Caco-2 (cell line): ENCODE measurements at regions of chr3 and their contacts with region 1.

Region 1: GRCh38 chr3:6799264-6799915 is 61.5 kb upstream of the GRM7 start:
- DNase-seq: peak; percentile 31 to 54
- H3K4me3 ChIP-seq: no peak overlapping the region
- H3K4me3 Mint-ChIP-seq: no peak overlapping the region
- H3K27ac Mint-ChIP-seq: no peak overlapping the region
- H3K4me1 ChIP-seq: no peaks in the 10 kb centered on the region
- H3K4me1 Mint-ChIP-seq: no peaks in the 10 kb centered on the region
- H3K27me3 ChIP-seq: no peaks in the 10 kb centered on the region
- H3K27me3 Mint-ChIP-seq: no peaks in the 10 kb centered on the region
- CTCF ChIP-seq: peak; percentile 80 to 81

Region 2: DNA sequence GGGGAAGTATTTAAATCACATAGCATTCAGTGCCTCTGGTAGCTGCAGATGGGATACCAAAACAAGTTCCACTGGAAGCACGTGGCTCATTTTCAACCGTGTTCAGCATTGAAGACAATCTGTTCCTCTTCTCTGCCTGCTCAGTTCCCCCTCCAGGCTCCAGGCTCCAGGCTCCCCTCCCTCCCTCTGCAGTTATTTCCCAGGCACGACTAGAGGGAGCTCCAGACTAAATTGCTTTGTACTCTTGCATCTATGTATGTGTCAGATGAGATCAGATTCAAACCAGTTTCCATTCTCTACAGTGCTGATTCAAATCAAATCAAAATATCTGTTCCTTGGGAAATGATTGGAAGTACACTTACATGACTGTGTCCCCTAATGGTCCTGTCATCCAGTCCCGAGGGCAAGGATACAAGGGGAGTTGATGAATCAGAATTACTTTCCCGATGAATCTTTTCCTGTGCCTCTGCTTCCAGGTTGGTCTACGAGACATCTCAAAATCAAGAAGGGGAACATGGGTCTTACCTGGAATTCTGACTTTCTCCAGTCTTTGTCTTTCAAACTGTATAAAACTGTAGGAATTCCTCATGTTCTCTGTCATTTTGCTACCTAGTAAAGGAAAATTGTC is 1011.4 kb before region 1 on chr3:
- CTCF ChIA-PET with region 1: no interaction called
- POLR2A ChIA-PET with region 1: no interaction called
- intact Hi-C with region 1: loop called (anchors 1 kb)
- DNase-seq: peak in 1 of 2 experiments; percentile 23
- H3K4me3 ChIP-seq: no peak overlapping the region
- H3K4me3 Mint-ChIP-seq: no peak overlapping the region
- H3K27ac Mint-ChIP-seq: no peak overlapping the region
- H3K4me1 ChIP-seq: no peaks in the 10 kb centered on the region
- H3K4me1 Mint-ChIP-seq: no peaks in the 10 kb centered on the region
- H3K27me3 ChIP-seq: no peaks in the 10 kb centered on the region
- H3K27me3 Mint-ChIP-seq: no peaks in the 10 kb centered on the region
- CTCF ChIP-seq: peak in 1 of 2 experiments; percentile 43

Region 3: DNA sequence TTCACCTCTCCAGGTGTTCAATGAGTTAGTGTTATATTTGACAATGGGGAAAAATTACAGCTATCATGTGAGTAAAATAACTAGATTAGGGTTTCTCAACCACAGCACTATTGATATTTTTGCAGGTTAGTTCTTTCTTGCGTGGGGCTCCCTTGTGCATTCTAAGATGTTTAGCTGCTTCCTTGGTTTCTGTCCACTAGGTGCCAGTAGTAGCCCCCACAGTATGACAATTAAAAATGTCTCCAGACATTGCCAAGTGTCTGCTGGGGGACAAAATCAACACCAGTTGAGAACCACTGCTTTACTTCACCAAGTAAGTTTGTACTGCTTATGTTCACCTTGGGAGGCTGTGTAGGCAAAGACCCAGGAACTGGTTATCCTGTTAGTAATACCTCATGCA is 993.2 kb before region 1 on chr3:
- CTCF ChIA-PET with region 1: no interaction called
- POLR2A ChIA-PET with region 1: no interaction called
- intact Hi-C with region 1: loop called (anchors 1 kb)
- DNase-seq: peak in 1 of 2 experiments; percentile 8
- H3K4me3 ChIP-seq: no peak overlapping the region
- H3K4me3 Mint-ChIP-seq: no peak overlapping the region
- H3K27ac Mint-ChIP-seq: no peak overlapping the region
- H3K4me1 ChIP-seq: no peaks in the 10 kb centered on the region
- H3K4me1 Mint-ChIP-seq: no peaks in the 10 kb centered on the region
- H3K27me3 ChIP-seq: no peaks in the 10 kb centered on the region
- H3K27me3 Mint-ChIP-seq: peaks cover 4% of the 10 kb centered on the region
- CTCF ChIP-seq: peak; percentile 45 to 55

Region 4: GRCh38 chr3:6204891-6205290 is 594.5 kb before region 1 on chr3:
- CTCF ChIA-PET with region 1: no interaction called
- POLR2A ChIA-PET with region 1: no interaction called
- intact Hi-C with region 1: loop called (anchors 1 kb)
- DNase-seq: no peak
- H3K4me3 ChIP-seq: no peak overlapping the region
- H3K4me3 Mint-ChIP-seq: no peak overlapping the region
- H3K27ac Mint-ChIP-seq: no peak overlapping the region
- H3K4me1 ChIP-seq: no peaks in the 10 kb centered on the region
- H3K4me1 Mint-ChIP-seq: no peaks in the 10 kb centered on the region
- H3K27me3 ChIP-seq: no peaks in the 10 kb centered on the region
- H3K27me3 Mint-ChIP-seq: no peaks in the 10 kb centered on the region
- CTCF ChIP-seq: peak in 1 of 2 experiments; percentile 12

Region 5: GRCh38 chr3:6392123-6392522 is 407.3 kb before region 1 on chr3:
- CTCF ChIA-PET with region 1: no interaction called
- POLR2A ChIA-PET with region 1: no interaction called
- intact Hi-C with region 1: loop called (anchors 1 kb)
- DNase-seq: no peak
- H3K4me3 ChIP-seq: no peak overlapping the region
- H3K4me3 Mint-ChIP-seq: no peak overlapping the region
- H3K27ac Mint-ChIP-seq: no peak overlapping the region
- H3K4me1 ChIP-seq: peaks cover 7% of the 10 kb centered on the region; the same call in 1 of the 2 replicates
- H3K4me1 Mint-ChIP-seq: peaks cover 7% of the 10 kb centered on the region
- H3K27me3 ChIP-seq: no peaks in the 10 kb centered on the region
- H3K27me3 Mint-ChIP-seq: no peaks in the 10 kb centered on the region
- CTCF ChIP-seq: no peak